IMR-90 (cell line): ENCODE measurements at regions of chr3 and their contacts with region 1.

Region 1: GRCh38 chr3:197511130-197511529 is 44.6 kb downstream of the BDH1 start:
- DNase-seq: peak; percentile 63
- ATAC-seq: peak; percentile 68
- H3K4me3 ChIP-seq: no peak overlapping the region
- H3K27ac ChIP-seq: no peak overlapping the region
- H3K4me1 ChIP-seq: no peaks in the 10 kb centered on the region
- H3K27me3 ChIP-seq: peaks cover 10% of the 10 kb centered on the region; the same call in 1 of the 2 replicates
- CTCF ChIP-seq: no peak
- POLR2A ChIP-seq: no peak
- RAD21 ChIP-seq: no peak

Region 2: GRCh38 chr3:196979545-196979944 is 531.6 kb before region 1 on chr3:
- CTCF ChIA-PET with region 1: no interaction called
- POLR2A ChIA-PET with region 1: no interaction called
- dilution Hi-C with region 1: no loop called
- in situ Hi-C with region 1: no loop called
- intact Hi-C with region 1: loop called (anchors 2 kb)
- DNase-seq: peak; percentile 57
- ATAC-seq: no peak
- H3K4me3 ChIP-seq: no peak overlapping the region
- H3K27ac ChIP-seq: no peak overlapping the region
- H3K4me1 ChIP-seq: no peaks in the 10 kb centered on the region
- H3K27me3 ChIP-seq: no peaks in the 10 kb centered on the region; the same call in 1 of the 2 replicates
- CTCF ChIP-seq: no peak
- POLR2A ChIP-seq: no peak
- RAD21 ChIP-seq: no peak

Region 3: DNA sequence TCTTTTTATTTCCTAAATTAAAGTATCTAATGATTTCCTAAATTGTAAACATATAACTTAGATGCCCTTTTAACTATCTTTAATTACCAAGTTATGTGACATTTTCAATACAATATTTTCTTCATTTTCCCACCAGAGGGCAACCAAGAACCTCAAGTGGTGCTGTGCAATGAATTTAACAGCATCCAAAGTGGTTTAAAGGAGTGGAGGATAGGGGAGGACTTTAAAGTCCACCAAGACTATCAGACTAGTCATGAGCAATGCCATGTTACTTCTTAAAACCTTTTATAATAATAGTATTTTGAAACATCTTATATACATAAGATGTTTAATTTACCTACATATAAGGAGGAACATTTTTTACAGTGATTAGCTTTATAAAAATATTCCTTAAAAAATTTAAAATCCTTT is 287.1 kb before region 1 on chr3:
- CTCF ChIA-PET with region 1: no interaction called
- POLR2A ChIA-PET with region 1: no interaction called
- dilution Hi-C with region 1: no loop called
- in situ Hi-C with region 1: no loop called
- intact Hi-C with region 1: loop called (anchors 1 kb)
- DNase-seq: peak; percentile 67
- ATAC-seq: peak; percentile 79
- H3K4me3 ChIP-seq: no peak overlapping the region
- H3K27ac ChIP-seq: no peak overlapping the region
- H3K4me1 ChIP-seq: peaks cover 2% of the 10 kb centered on the region
- H3K27me3 ChIP-seq: no peaks in the 10 kb centered on the region
- CTCF ChIP-seq: peak; percentile 65
- POLR2A ChIP-seq: 0 out of 2 replicates have a peak, but pooled peaks have one; percentile 23
- RAD21 ChIP-seq: peak; percentile 78

Region 4: GRCh38 chr3:197256836-197257444 is 254.2 kb before region 1 on chr3:
- CTCF ChIA-PET with region 1: interaction called, 3 read pairs
- POLR2A ChIA-PET with region 1: no interaction called
- dilution Hi-C with region 1: no loop called
- in situ Hi-C with region 1: loop called (anchors 10 kb)
- intact Hi-C with region 1: loop called (anchors 1 kb)
- DNase-seq: peak; percentile 64
- ATAC-seq: 0 out of 2 replicates have a peak, but pooled peaks have one; percentile 49
- H3K4me3 ChIP-seq: no peak overlapping the region
- H3K27ac ChIP-seq: no peak overlapping the region
- H3K4me1 ChIP-seq: peaks cover 2% of the 10 kb centered on the region
- H3K27me3 ChIP-seq: no peaks in the 10 kb centered on the region
- CTCF ChIP-seq: peak; percentile 74
- POLR2A ChIP-seq: no peak
- RAD21 ChIP-seq: peak; percentile 70

Region 5: DNA sequence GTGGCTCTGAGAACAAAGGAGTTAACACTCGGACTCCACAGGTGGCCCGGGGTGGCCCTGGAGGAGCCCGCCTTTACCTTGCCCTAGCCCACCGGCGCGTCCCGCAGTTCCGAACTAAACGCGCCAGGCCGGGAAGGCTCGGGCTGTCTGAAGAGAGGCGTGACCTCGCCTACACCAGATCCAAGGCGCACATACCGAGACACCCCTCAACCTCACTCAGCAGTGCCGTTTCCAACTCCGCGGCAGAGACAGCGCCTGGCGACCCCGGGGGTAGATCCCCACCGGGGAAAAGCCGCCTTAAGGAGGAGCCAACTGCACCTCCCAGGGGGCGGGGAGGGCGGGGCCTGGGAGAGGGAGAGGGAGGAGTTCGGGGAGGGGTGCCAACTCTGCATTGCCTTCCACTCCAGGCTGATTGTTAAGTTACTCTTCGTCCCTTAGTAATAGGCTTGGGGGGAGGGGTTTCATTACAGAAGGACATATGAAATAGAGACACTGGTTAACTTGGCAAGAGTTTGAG is 212.7 kb before region 1 on chr3 and contains the start of gene DLG1:
- CTCF ChIA-PET with region 1: no interaction called
- POLR2A ChIA-PET with region 1: no interaction called
- dilution Hi-C with region 1: no loop called
- in situ Hi-C with region 1: no loop called
- intact Hi-C with region 1: loop called (anchors 2 kb)
- DNase-seq: peak; percentile 92
- ATAC-seq: peak; percentile 84
- H3K4me3 ChIP-seq: peak within 1 kb of the TSS; percentile 98
- H3K27ac ChIP-seq: peak within 1 kb of the TSS; percentile 68
- H3K4me1 ChIP-seq: peaks cover 8% of the 10 kb centered on the region
- H3K27me3 ChIP-seq: no peaks in the 10 kb centered on the region
- CTCF ChIP-seq: no peak
- POLR2A ChIP-seq: peak; percentile 84
- RAD21 ChIP-seq: no peak
- total RNA-seq, gene DLG1: 57.7 and 58.6 TPM in 2 replicates